ENCODE measurements at regions of chr18 and their contacts with region 1.

Region 1: DNA sequence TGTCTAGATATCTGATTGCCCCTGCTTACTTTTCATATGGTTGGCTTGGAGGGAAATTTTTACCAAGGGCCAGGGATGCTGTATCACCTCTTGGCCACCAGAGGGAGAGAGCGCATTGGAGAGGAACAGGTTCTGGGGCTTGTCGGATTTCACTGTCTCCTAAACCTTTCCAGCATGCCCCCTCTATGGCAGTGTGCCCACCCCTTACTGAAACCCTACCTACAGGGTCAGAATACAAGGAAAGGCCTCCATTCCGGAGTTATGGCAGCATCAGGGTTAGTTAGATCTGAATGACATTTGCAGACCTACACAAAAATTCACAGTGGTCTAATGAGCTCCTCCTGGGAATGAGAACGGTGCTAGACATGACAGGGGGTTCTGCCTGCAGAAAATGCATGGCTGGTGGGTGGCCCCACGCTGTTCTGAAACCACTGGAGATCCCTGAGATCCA is 5.8 kb downstream of the SLC14A2 start:
- DNase-seq: peak in 1 of 2 donors; percentile 82
- H3K4me3 ChIP-seq: no peak overlapping the region
- H3K27ac ChIP-seq: no peak overlapping the region
- H3K4me1 ChIP-seq: peaks cover 10 to 44% of the 10 kb centered on the region in 2 donors
- H3K27me3 ChIP-seq: no peaks in the 10 kb centered on the region
- CTCF ChIP-seq: peak; percentile 85 to 97 (median 88)

Region 2: GRCh38 chr18:44594799-44595467 is 1026.2 kb before region 1 on chr18:
- intact Hi-C with region 1: loop called (anchors 10 kb)
- DNase-seq: no peak
- H3K4me3 ChIP-seq: no peak overlapping the region
- H3K27ac ChIP-seq: peak overlapping the region in 1 of 2 donors; percentile 52
- H3K4me1 ChIP-seq: peaks cover 4 to 59% of the 10 kb centered on the region in 2 donors
- H3K27me3 ChIP-seq: no peaks in the 10 kb centered on the region
- CTCF ChIP-seq: no peak

Region 3: GRCh38 chr18:45014047-45014501 is 607.0 kb before region 1 on chr18:
- intact Hi-C with region 1: loop called (anchors 10 kb)
- DNase-seq: peak in 1 of 2 donors; percentile 69
- H3K4me3 ChIP-seq: no peak overlapping the region
- H3K27ac ChIP-seq: peak overlapping the region; percentile 59 to 61
- H3K4me1 ChIP-seq: peaks cover 3 to 34% of the 10 kb centered on the region in 2 donors
- H3K27me3 ChIP-seq: no peaks in the 10 kb centered on the region
- CTCF ChIP-seq: peak in 2 of 3 experiments; percentile 18 to 19

Region 4: DNA sequence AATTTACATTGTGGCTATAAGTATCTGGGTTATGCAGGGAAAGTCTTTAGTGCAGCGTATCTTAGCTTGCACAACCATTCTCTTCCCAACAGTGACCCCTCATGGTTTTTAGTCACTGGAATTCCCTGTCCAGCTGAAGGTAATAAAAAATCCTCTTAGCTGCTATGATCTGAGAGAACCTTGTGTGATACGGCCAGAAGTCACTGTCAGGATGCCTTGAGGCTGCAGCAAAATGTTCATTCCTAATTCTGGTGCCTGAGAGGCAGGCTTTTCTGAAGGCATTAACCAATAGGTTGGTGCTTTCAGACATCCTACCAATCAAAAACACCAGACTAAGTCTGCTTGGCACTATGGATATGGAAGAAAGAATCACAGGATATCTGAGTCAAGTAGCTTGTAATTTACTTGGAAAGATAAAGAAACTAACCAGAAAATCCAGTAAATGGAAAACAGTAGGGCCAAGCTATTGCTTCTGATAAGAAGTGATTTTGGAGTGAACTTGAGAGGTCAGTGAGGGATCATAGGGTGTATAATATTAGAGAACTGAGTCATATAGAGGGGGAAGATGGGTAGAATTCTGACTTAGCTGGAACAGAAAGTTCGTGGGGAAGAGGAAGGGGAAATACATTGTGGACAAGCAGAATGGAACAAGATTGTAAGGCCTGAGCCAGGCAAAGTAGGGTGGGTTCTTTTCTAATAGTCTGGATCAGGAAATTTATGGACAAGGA is 94.8 kb before region 1 on chr18:
- intact Hi-C with region 1: loop called (anchors 5 kb)
- DNase-seq: no peak
- H3K4me3 ChIP-seq: no peak overlapping the region
- H3K27ac ChIP-seq: peak overlapping the region; percentile 16 to 53
- H3K4me1 ChIP-seq: peaks cover 10 to 28% of the 10 kb centered on the region in 2 donors
- H3K27me3 ChIP-seq: no peaks in the 10 kb centered on the region
- CTCF ChIP-seq: peak in 1 of 3 experiments; percentile 36

Region 5: DNA sequence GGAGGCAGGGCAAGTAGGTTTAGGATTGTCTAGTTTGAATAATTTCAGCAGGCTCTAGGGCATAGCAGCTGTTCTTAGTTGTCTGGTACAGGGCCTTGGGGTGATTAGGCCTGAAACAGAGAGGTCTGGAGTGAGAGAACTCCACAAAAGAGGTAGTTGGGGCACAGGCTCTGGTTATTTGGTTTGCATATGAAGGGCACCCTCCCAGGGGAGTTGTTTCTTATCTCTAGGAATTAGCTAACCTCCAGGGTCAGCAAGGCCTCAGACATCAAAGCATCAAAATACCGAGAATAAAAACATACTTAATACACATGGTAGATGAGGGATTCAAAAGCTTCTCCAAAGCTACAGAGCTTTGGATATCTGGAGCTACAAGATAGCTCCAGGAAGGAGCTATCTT is 44.2 kb before region 1 on chr18:
- intact Hi-C with region 1: loop called (anchors 5 kb)
- DNase-seq: no peak
- H3K4me3 ChIP-seq: no peak overlapping the region
- H3K27ac ChIP-seq: no peak overlapping the region
- H3K4me1 ChIP-seq: peaks cover 0 to 3% of the 10 kb centered on the region in 2 donors
- H3K27me3 ChIP-seq: no peaks in the 10 kb centered on the region
- CTCF ChIP-seq: no peak

Region 6: GRCh38 chr18:45664824-45665763 is 44.0 kb after region 1 on chr18:
- intact Hi-C with region 1: loop called (anchors 2 kb)
- DNase-seq: peak in 1 of 2 donors; percentile 88
- H3K4me3 ChIP-seq: no peak overlapping the region
- H3K27ac ChIP-seq: no peak overlapping the region
- H3K4me1 ChIP-seq: peaks cover 8 to 25% of the 10 kb centered on the region in 2 donors
- H3K27me3 ChIP-seq: no peaks in the 10 kb centered on the region
- CTCF ChIP-seq: peak; percentile 90 to 99 (median 93)

Region 7: DNA sequence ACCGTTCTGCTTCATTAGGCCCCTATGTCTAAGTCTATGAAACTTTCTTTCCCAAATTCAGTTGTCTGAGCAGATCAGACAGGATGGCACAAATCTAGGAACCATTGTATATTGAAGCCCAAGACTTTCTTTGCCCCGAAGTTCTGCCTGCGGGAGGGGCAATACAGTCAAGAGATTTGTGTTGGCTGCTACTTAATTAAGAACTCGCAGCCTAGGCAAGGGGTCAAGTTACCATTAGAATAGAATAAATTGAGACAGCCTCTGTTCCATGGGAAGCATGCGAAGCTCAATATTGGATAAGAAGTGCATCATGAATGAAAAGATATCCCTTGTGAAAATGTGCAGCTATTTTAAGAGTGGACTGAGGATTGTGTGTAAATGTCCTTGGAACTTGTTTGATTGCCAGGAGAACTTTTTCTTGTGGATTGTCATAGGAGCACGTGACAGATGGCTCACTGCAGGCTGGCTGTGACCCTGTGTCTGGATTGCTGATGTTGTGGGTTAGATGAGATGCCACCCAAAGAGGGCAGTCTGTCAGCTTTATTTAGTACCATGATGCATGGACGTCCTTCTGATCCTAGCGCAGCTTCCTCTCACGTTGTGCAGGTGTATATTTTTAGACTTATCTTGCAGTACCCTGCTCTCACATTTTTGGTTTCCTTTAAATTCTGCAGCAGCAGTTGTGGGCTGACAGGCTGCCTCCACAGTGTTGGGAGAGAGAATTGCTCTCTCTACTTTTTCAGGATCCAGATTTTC is 514.0 kb after region 1 on chr18:
- intact Hi-C with region 1: no loop called
- DNase-seq: no peak
- H3K4me3 ChIP-seq: no peak overlapping the region
- H3K27ac ChIP-seq: no peak overlapping the region
- H3K4me1 ChIP-seq: no peaks in the 10 kb centered on the region
- H3K27me3 ChIP-seq: no peaks in the 10 kb centered on the region
- CTCF ChIP-seq: no peak

Measured in ascending aorta (tissue), 2 donors.